PC-3 (cell line): ENCODE measurements at regions of chr19 and their contacts with region 1.

Region 1: DNA sequence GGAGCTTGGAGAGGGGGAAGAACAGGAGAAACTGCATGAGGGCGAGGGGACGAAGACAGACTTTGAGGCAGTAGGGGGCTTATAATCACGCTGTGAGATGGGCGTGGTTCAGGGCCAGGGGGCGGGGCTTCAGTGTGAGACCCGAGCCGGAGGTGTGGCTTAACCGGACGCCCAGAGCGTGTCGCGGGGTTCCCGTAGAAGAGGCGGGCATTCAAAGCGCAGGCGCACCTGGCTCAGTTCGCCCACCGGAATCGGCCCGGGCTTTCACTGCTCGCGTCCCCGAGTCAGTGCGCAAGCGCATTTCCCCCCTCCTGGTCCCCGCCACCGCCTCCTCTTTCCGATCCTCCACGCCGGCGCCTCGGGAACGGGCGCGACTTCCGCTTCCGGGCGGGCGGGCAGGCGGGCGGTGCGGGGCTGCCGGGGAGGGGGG is 225 bp upstream of the ZNF865 start:
- DNase-seq: peak; percentile 99
- ATAC-seq: peak; percentile 79
- H3K4me3 ChIP-seq: peak overlapping the region; percentile 82
- H3K27ac ChIP-seq: peak overlapping the region; percentile 71
- H3K4me1 ChIP-seq: peaks cover 22% of the 10 kb centered on the region
- H3K27me3 ChIP-seq: no peaks in the 10 kb centered on the region
- CTCF ChIP-seq: no peak

Region 2: DNA sequence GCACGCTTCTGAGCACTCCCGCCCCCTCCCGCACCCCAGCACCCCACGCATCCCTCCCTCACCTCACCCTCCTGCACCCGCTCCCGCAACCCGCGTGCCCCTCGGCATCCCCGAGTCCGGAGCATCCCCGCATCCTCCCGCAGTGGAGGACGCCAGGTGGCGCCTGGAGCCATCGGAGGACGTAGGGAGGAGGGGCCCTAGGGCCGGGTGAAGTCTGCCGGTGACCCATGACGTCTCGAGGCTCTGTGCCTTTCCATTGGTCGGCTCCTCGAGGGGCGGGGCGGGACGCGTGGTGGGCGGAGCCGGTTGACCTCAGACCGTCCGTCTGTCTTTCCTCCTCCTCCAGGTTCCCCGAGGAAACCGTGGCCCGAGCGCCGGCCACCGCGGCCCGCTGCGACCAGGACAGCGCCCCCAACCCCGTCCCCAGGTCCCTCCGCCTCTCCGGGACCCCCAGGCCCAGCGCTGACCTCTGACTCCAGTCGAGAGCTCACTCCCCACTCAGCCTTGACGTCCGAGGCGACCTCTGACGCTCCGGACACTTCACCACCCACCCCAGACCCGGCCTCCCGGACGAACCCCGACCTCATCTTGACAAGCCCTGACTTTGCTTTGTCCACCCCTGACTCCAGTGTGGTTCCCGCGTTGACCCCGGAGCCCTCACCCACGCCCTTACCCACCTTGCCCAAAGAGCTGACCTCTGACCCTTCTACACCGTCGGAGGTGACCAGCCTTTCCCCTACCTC is 88.2 kb before region 1 on chr19:
- CTCF ChIA-PET with region 1: interaction called, 12 read pairs
- POLR2A ChIA-PET with region 1: no interaction called
- intact Hi-C with region 1: loop called (anchors 1 kb)
- DNase-seq: peak; percentile 97
- ATAC-seq: peak; percentile 96
- H3K4me3 ChIP-seq: peak overlapping the region; percentile 65
- H3K27ac ChIP-seq: no peak overlapping the region
- H3K4me1 ChIP-seq: peaks cover 8% of the 10 kb centered on the region; the same call in 1 of the 2 replicates
- H3K27me3 ChIP-seq: 0 out of 2 replicates have a peak, but pooled peaks cover 4% of the 10 kb centered on the region
- CTCF ChIP-seq: peak; percentile 95

Region 3: GRCh38 chr19:55566823-55567222 is 38.4 kb before region 1 on chr19:
- CTCF ChIA-PET with region 1: no interaction called
- POLR2A ChIA-PET with region 1: no interaction called
- intact Hi-C with region 1: no loop called
- DNase-seq: no peak
- ATAC-seq: no peak
- H3K4me3 ChIP-seq: no peak overlapping the region
- H3K27ac ChIP-seq: no peak overlapping the region
- H3K4me1 ChIP-seq: no peaks in the 10 kb centered on the region
- H3K27me3 ChIP-seq: no peaks in the 10 kb centered on the region
- CTCF ChIP-seq: no peak

Region 4: DNA sequence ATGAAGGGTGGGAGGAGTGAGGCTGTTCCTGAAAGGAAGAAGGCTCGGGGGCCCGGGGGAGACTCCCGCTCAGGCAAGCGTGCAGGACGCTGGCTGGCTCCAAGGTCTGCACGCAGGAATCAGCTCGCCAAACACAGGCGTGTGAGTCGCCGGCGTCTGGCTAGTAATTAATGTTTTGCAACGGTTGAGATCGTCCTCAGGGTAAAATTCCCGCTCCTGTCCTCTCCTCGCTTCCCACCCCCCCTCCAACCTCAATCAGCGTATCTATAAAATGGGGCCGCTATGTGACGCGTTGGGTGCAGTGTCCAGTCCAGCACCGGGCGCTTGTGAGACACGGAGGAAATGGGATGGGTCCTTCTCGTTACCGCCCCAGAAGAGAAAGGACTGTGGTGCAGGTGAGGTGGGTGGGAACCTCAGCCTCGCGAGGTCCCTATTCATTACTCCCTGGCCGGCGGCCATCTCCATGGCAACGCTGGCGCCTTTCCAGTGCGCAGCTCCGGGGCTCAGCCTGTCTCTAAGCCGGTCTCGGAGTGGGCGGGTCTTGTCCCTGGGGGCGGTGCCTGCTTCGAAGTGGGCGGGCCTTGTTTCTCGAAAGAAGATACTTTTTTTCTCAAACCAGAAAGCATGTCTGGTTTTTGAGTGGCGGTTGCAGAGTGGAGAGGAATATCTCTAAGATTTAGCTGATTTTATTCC is 18.1 kb before region 1 on chr19:
- CTCF ChIA-PET with region 1: interaction called, 4 read pairs
- POLR2A ChIA-PET with region 1: interaction called, 15 read pairs
- intact Hi-C with region 1: no loop called
- DNase-seq: peak; percentile 99
- ATAC-seq: peak; percentile 91
- H3K4me3 ChIP-seq: peak overlapping the region; percentile 66
- H3K27ac ChIP-seq: no peak overlapping the region
- H3K4me1 ChIP-seq: peaks cover 10% of the 10 kb centered on the region
- H3K27me3 ChIP-seq: no peaks in the 10 kb centered on the region
- CTCF ChIP-seq: no peak

Region 5: DNA sequence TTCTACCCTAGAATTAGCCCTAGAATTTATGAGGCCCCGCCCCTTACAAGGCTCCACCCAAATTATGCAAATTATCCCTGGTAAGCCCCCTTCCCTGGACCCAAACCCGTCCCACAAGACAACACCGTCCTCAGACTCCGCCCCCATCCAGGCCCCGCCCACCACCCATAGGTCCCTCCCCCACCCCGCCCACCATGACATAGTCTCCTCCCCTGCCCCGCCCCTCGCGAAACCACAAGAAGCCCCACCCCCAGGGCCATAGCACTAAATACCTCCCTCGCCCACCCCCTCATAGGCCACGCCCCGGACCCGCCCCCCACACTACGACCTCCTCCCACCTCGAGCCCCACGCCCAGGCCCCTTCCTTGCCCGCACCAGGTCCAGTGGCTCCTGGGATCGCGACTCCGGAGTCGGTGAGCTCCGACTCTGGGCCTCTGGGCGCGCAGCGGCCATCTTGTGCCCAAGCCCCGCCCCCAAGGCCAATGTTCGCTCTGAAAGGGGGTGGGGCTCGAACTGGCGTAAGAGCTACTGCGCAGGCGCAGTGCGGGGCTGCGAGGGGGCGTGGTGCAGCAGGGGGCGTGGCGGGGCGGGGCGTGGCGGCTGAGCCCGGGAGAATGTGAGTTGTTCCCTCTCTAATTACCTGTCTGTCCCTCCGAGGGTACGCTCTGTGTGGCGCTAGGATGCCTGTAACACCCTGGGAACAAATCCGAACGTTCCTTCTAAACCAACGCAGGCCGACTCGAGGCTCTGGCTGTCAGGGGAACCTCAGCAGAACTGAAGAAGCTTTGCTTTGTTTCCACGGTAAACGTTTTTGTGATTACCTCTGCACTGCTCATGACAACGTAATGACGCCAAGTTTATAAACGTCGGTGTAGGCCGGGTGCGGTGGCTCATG is 19.1 kb after region 1 on chr19 and contains the start of gene ZNF784:
- CTCF ChIA-PET with region 1: interaction called, 4 read pairs
- POLR2A ChIA-PET with region 1: no interaction called
- intact Hi-C with region 1: loop called (anchors 1 kb)
- DNase-seq: peak; percentile 95
- ATAC-seq: peak; percentile 87
- H3K4me3 ChIP-seq: peak within 1 kb of the TSS; percentile 71
- H3K27ac ChIP-seq: peak within 1 kb of the TSS; percentile 76
- H3K4me1 ChIP-seq: peaks cover 10% of the 10 kb centered on the region
- H3K27me3 ChIP-seq: no peaks in the 10 kb centered on the region
- CTCF ChIP-seq: no peak
- total RNA-seq, gene ZNF784: 9.0 and 18.0 TPM in 2 replicates

Region 6: GRCh38 chr19:55632463-55632834 is 27.2 kb after region 1 on chr19:
- CTCF ChIA-PET with region 1: interaction called, 12 read pairs
- POLR2A ChIA-PET with region 1: no interaction called
- intact Hi-C with region 1: no loop called
- DNase-seq: peak; percentile 99
- ATAC-seq: peak; percentile 73
- H3K4me3 ChIP-seq: no peak overlapping the region
- H3K27ac ChIP-seq: no peak overlapping the region
- H3K4me1 ChIP-seq: peaks cover 13% of the 10 kb centered on the region
- H3K27me3 ChIP-seq: no peaks in the 10 kb centered on the region
- CTCF ChIP-seq: peak; percentile 96